ENCODE measurements at regions of chr14 and their contacts with region 1.

Region 1: DNA sequence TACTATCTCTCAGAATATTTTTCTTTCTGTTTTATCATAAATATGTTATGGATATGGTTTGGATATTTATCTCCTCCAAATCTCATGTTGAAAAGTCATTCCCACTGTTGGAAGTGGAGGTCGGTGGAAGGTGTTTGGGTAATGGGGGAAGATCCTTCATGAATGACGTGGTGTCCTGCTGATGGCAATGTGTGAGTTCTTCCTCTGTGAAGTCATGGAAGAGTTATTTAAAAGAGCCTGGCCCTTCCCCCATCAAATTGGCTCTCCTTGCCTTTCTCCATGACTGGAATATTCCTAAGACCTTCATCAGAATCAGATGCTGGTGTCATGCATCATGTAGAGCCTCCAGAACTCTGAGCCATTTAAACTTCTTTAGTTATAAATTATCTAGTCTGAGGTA is 1291.6 kb downstream of the FSCB start:
- DNase-seq: no peak
- H3K4me3 ChIP-seq: no peak overlapping the region
- H3K27ac ChIP-seq: no peak overlapping the region
- H3K4me1 ChIP-seq: no peaks in the 10 kb centered on the region
- H3K27me3 ChIP-seq: no peaks in the 10 kb centered on the region
- CTCF ChIP-seq: no peak
- POLR2A ChIP-seq: no peak

Region 2: DNA sequence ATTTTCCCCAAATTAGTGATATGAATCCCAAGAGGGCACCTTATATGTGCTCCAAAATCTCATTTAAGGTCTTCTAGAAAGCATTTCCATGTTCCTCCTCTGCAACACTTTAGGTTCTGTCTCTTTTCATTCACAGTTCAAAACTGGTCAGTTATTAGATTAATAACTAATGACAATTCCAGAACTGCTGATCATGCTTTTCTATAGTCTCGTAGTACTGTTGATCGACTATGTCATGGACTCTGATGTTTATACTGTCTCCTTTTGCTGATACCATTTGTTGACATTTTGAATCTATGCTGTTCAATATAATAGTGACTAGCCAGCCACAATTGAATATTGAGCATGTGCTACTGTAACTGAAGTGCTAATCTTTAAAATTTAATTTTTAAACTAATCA is 880.6 kb before region 1 on chr14:
- intact Hi-C with region 1: loop called (anchors 5 kb)
- DNase-seq: no peak
- H3K4me3 ChIP-seq: no peak overlapping the region
- H3K27ac ChIP-seq: no peak overlapping the region
- H3K4me1 ChIP-seq: no peaks in the 10 kb centered on the region
- H3K27me3 ChIP-seq: no peaks in the 10 kb centered on the region
- CTCF ChIP-seq: no peak
- POLR2A ChIP-seq: no peak

Measured in breast epithelium (tissue), 4 donors.